Upper lobe of right lung (tissue), 1 donor: ENCODE measurements at regions of chr11 and their contacts with region 1.

Region 1: DNA sequence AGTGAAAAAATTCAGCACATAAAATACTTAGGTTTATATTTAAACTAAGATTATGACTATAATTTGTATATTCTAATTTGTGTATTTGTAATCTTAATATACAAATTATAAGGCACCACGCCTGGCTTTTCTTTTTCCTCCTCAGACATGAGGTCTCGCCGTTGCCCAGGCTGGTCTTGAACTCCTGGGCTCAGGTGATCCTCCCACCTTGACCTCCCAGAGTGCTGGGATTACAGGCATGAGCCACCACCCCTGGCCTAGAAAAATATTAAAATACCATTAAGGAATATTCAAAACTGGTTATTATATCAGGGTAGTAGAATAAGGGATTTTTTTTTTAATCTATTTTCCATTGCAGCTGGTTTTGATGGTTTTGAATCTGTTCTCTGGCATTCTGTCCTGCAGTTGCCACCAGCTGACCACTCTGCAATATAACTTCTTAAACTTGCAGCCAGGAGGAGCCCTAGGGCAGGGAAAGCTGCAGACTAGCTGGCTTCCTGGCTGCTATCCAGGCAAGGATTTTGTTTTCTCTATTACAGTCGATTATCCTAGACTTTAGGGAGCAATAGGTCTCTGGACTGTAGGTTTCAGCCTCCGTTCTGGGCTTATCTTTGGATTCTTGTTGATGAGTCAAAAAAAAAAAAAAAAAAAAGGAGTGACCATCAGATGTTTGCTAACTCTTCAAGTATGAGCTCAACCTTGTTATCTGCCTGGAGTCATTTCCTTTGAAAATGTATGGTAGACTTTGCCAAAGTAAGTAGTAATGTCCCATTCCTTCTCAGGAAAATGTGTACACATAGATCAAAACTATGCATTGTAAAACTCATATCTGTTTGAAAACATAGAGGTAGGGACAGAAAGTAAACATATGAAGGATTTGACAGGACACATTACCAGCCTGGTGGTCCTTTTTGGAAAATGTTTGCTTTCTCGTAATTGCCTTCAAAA is 13.2 kb downstream of the POLA2 start:
- DNase-seq: peak; percentile 68
- ATAC-seq: peak; percentile 95
- H3K4me3 ChIP-seq: no peak overlapping the region
- H3K27ac ChIP-seq: peak overlapping the region; percentile 26
- H3K4me1 ChIP-seq: peaks cover 7% of the 10 kb centered on the region
- H3K27me3 ChIP-seq: no peaks in the 10 kb centered on the region
- CTCF ChIP-seq: peak; percentile 71

Region 2: GRCh38 chr11:65329944-65330403 is 55.0 kb after region 1 on chr11:
- intact Hi-C with region 1: loop called (anchors 5 kb)
- DNase-seq: no peak
- ATAC-seq: peak; percentile 61
- H3K4me3 ChIP-seq: no peak overlapping the region
- H3K27ac ChIP-seq: no peak overlapping the region
- H3K4me1 ChIP-seq: peaks cover 13% of the 10 kb centered on the region
- H3K27me3 ChIP-seq: no peaks in the 10 kb centered on the region
- CTCF ChIP-seq: peak; percentile 84

Region 3: GRCh38 chr11:65340226-65340625 is 65.2 kb after region 1 on chr11:
- intact Hi-C with region 1: no loop called
- DNase-seq: no peak
- ATAC-seq: no peak
- H3K4me3 ChIP-seq: no peak overlapping the region
- H3K27ac ChIP-seq: no peak overlapping the region
- H3K4me1 ChIP-seq: peaks cover 6% of the 10 kb centered on the region
- H3K27me3 ChIP-seq: no peaks in the 10 kb centered on the region
- CTCF ChIP-seq: no peak